ENCODE measurements at regions of chr11 and their contacts with region 1.

Region 1: GRCh38 chr11:28965819-28966218 is 857.6 kb downstream of the METTL15 start:
- DNase-seq: peak; percentile 40
- H3K4me3 ChIP-seq: no peak overlapping the region
- H3K27me3 ChIP-seq: no peaks in the 10 kb centered on the region
- CTCF ChIP-seq: no peak

Region 2: GRCh38 chr11:27472398-27473016 is 1493.3 kb before region 1 on chr11 and contains the start of gene LGR4:
- CTCF ChIA-PET with region 1: no interaction called
- POLR2A ChIA-PET with region 1: interaction called, 21 read pairs
- DNase-seq: peak; percentile 73
- H3K4me3 ChIP-seq: peak within 1 kb of the TSS; percentile 78
- H3K27me3 ChIP-seq: no peaks in the 10 kb centered on the region
- CTCF ChIP-seq: no peak
- polyA plus RNA-seq, gene LGR4: 7.6 and 12.5 TPM in 2 replicates

Region 3: DNA sequence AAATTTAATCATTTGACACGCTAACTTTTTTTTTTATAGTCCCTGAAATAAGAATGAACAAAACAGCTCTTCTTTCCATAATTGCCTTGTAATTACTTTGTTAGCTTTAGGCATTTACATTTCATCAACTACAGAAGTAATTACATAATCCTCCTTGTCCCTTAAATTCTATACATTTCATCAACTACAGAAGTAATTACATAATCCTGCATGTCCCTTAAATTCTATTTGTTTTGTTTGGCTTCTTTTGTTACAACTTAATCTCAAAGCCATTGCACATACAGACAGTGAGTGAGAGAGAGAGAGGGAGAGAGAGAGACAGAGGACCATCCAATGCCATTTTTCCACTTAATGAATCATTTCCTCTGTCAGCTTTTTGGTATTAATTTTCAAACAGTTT is 15.6 kb after region 1 on chr11:
- CTCF ChIA-PET with region 1: no interaction called
- POLR2A ChIA-PET with region 1: no interaction called
- DNase-seq: no peak
- H3K4me3 ChIP-seq: no peak overlapping the region
- H3K27me3 ChIP-seq: no peaks in the 10 kb centered on the region
- CTCF ChIP-seq: no peak

Region 4: DNA sequence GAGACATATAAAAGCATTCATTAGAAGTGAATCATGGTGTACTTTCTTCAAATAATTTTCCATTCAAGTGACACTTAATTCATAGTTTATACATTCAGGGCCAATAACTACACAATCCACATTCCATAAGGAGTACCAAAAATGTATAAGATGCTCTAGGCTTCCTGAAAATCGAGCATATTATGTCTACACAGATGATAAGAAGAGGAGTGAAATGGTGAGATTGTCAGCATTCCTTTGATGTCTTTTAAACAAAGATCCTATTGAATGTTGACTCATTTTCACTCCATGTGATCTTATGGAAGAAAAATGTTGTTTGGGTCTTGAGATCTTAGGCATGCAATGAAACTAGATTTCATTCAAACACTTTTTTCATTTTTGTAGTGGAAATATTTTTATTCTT is 207.8 kb after region 1 on chr11:
- CTCF ChIA-PET with region 1: no interaction called
- POLR2A ChIA-PET with region 1: no interaction called
- DNase-seq: peak; percentile 62
- H3K4me3 ChIP-seq: no peak overlapping the region
- H3K27me3 ChIP-seq: no peaks in the 10 kb centered on the region
- CTCF ChIP-seq: no peak